K562 (cell line): ENCODE measurements at regions of chr22 and their contacts with region 1.

Region 1: DNA sequence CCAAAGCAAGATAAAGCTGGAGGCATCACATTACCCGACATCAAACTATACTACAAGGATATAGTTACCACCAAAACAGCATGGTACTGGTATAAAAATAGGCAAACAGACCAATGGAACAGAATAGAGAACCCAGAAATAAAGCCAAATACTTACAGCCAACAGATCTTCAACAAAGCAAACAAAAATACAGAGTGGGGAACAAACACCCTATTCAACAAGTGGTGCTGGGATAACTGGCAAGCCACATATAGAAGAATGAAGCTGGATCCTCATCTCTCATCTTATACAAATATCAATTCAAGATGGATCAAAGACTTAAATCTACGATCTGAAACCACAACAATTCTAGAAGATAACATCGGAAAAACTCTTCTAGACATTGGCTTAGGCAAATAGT is 50.0 kb upstream of the CLTCL1 start:
- DNase-seq: no peak
- ATAC-seq: no peak
- H3K4me3 ChIP-seq: no peak overlapping the region
- H3K27ac ChIP-seq: no peak overlapping the region
- H3K4me1 ChIP-seq: no peaks in the 10 kb centered on the region
- H3K27me3 ChIP-seq: no peaks in the 10 kb centered on the region
- CTCF ChIP-seq: no peak
- EP300 ChIP-seq: no peak
- POLR2A ChIP-seq: no peak
- RAD21 ChIP-seq: no peak

Region 2: DNA sequence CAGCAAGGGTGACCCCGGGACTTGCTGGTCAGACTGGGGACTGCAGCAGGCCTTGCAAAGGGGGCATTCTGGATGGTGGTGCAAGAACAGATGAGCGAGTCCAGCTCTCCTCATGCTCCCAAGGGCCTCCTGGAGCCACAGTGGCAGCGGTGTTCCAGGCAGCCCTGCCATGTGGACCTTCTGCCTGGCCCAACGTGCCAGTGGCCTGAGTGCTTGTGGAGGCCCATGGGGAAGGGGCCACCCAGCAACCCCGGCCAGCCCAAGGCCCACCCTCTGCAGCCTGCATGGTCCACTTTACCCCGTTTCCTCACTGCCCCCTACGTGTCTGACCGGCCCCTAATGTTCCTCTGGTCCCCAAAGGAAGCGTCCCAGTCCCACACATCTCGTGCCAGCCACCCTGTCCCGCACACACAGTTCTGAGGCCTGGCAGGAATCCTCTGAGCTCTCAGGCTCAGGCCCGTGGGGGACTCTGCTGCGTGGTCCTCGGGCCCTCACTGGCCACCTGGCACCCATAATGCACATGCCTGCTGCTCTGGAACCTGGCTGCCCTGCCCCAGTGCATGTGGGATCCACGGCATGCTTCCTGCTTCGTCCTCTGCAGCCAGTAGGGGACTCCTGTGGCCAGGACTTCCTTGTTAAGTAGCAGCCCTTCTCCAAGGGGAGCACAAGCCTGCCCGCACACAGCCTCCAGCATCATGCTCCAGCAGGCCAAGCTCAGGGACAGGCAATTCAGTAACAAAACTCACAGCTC is 304.8 kb before region 1 on chr22:
- CTCF ChIA-PET with region 1: no interaction called
- POLR2A ChIA-PET with region 1: no interaction called
- in situ Hi-C with region 1: no loop called
- intact Hi-C with region 1: no loop called
- DNase-seq: peak in 1 of 4 experiments; percentile 65
- ATAC-seq: peak; percentile 44
- H3K4me3 ChIP-seq: no peak overlapping the region
- H3K27ac ChIP-seq: no peak overlapping the region
- H3K4me1 ChIP-seq: peaks cover 0 to 36% of the 10 kb centered on the region in 2 experiments; a peak in 1 of 5 replicates
- H3K27me3 ChIP-seq: peaks cover 7 to 15% of the 10 kb centered on the region in 2 experiments; a peak in 4 of 5 replicates
- CTCF ChIP-seq: peak; percentile 55 to 62 (median 56); a peak in 5 of 6 replicates
- EP300 ChIP-seq: no peak
- POLR2A ChIP-seq: peak; percentile 68
- RAD21 ChIP-seq: peak in 1 of 2 experiments; percentile 46; a peak in 1 of 4 replicates

Region 3: GRCh38 chr22:19353363-19354131 is 12.0 kb after region 1 on chr22:
- CTCF ChIA-PET with region 1: no interaction called
- POLR2A ChIA-PET with region 1: interaction called, 11 read pairs
- in situ Hi-C with region 1: no loop called
- intact Hi-C with region 1: no loop called
- DNase-seq: no peak
- ATAC-seq: no peak
- H3K4me3 ChIP-seq: no peak overlapping the region
- H3K27ac ChIP-seq: no peak overlapping the region
- H3K4me1 ChIP-seq: peaks cover 0 to 7% of the 10 kb centered on the region in 2 experiments; a peak in 1 of 5 replicates
- H3K27me3 ChIP-seq: no peaks in the 10 kb centered on the region
- CTCF ChIP-seq: no peak
- EP300 ChIP-seq: no peak
- POLR2A ChIP-seq: no peak
- RAD21 ChIP-seq: no peak